CD4-positive, alpha-beta memory T cell (primary cell): ENCODE measurements at regions of chr10 and their contacts with region 1.

Region 1: GRCh38 chr10:5094265-5095205 is at the start of gene AKR1C3:
- DNase-seq: peak in 4 of 5 donors; percentile 13 to 41 (median 23)
- H3K4me3 ChIP-seq: peak within 1 kb of the TSS; percentile 19 to 74
- H3K4me3 Mint-ChIP-seq: peak within 1 kb of the TSS; percentile 80 to 91 (median 86)
- H3K27ac ChIP-seq: peak within 1 kb of the TSS; percentile 22
- H3K27ac Mint-ChIP-seq: peak within 1 kb of the TSS in 6 of 7 donors; percentile 19 to 74 (median 56)
- H3K4me1 ChIP-seq: peaks cover 9% of the 10 kb centered on the region
- H3K4me1 Mint-ChIP-seq: peaks cover 6 to 10% (median 7%) of the 10 kb centered on the region in 4 donors
- H3K27me3 ChIP-seq: no peaks in the 10 kb centered on the region
- H3K27me3 Mint-ChIP-seq: peaks cover 3 to 11% of the 10 kb centered on the region in 2 donors
- total RNA-seq, gene AKR1C3: 3.4 to 4.0 TPM

Region 2: DNA sequence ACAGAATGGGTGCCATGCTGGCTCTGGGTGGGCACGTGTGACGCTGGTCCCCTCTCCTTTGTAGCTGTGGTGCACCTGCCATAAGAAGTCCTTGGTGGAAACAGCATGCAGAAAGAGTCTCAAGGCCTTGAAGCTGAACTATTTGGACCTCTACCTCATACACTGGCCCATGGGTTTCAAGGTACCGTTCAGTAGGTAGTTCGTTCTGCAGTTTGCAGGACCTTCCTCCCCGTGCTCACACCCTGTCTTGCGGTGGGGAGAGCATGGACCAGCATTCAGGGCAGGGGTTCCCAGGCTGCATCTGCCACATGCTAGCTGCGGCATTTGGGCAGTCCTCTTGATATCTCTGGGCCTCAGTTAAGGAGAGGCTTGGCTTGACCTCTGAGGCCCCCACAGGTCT is 261.2 kb before region 1 on chr10:
- CTCF ChIA-PET with region 1: no interaction called
- POLR2A ChIA-PET with region 1: no interaction called
- intact Hi-C with region 1: no loop called
- DNase-seq: no peak
- H3K4me3 ChIP-seq: no peak overlapping the region
- H3K4me3 Mint-ChIP-seq: no peak overlapping the region
- H3K27ac ChIP-seq: no peak overlapping the region
- H3K27ac Mint-ChIP-seq: peak overlapping the region in 1 of 7 donors; percentile 51
- H3K4me1 ChIP-seq: peaks cover 35% of the 10 kb centered on the region
- H3K4me1 Mint-ChIP-seq: peaks cover 23 to 37% (median 32%) of the 10 kb centered on the region in 4 donors
- H3K27me3 ChIP-seq: no peaks in the 10 kb centered on the region
- H3K27me3 Mint-ChIP-seq: peaks cover 1 to 6% of the 10 kb centered on the region in 2 donors

Region 3: GRCh38 chr10:5012595-5012994 is 81.9 kb before region 1 on chr10:
- CTCF ChIA-PET with region 1: no interaction called
- POLR2A ChIA-PET with region 1: no interaction called
- intact Hi-C with region 1: no loop called
- DNase-seq: no peak
- H3K4me3 ChIP-seq: no peak overlapping the region
- H3K4me3 Mint-ChIP-seq: no peak overlapping the region
- H3K27ac ChIP-seq: no peak overlapping the region
- H3K27ac Mint-ChIP-seq: no peak overlapping the region
- H3K4me1 ChIP-seq: no peaks in the 10 kb centered on the region
- H3K4me1 Mint-ChIP-seq: no peaks in the 10 kb centered on the region
- H3K27me3 ChIP-seq: no peaks in the 10 kb centered on the region
- H3K27me3 Mint-ChIP-seq: peaks cover 0 to 4% of the 10 kb centered on the region in 2 donors

Region 4: DNA sequence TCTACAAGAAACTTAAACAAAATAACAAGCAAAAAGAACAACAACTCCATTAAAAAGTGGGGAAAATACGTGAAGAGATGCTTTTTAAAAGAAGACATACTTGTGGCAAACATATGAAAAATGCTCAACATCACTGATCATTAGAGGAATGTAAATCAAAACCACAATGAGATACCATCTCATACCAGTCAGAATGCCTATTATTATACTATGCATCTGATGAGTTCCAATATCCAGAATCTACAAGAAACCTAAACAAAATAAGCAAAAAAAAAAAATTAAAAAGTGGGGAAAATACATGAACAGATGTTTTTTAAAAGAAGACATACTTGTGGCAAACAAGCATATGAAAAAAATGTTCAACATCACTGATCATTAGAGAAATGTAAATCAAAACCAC is 29.9 kb before region 1 on chr10:
- CTCF ChIA-PET with region 1: no interaction called
- POLR2A ChIA-PET with region 1: no interaction called
- intact Hi-C with region 1: no loop called
- DNase-seq: no peak
- H3K4me3 ChIP-seq: no peak overlapping the region
- H3K4me3 Mint-ChIP-seq: no peak overlapping the region
- H3K27ac ChIP-seq: no peak overlapping the region
- H3K27ac Mint-ChIP-seq: no peak overlapping the region
- H3K4me1 ChIP-seq: no peaks in the 10 kb centered on the region
- H3K4me1 Mint-ChIP-seq: no peaks in the 10 kb centered on the region
- H3K27me3 ChIP-seq: no peaks in the 10 kb centered on the region
- H3K27me3 Mint-ChIP-seq: peaks cover 0 to 3% of the 10 kb centered on the region in 2 donors

Region 5: DNA sequence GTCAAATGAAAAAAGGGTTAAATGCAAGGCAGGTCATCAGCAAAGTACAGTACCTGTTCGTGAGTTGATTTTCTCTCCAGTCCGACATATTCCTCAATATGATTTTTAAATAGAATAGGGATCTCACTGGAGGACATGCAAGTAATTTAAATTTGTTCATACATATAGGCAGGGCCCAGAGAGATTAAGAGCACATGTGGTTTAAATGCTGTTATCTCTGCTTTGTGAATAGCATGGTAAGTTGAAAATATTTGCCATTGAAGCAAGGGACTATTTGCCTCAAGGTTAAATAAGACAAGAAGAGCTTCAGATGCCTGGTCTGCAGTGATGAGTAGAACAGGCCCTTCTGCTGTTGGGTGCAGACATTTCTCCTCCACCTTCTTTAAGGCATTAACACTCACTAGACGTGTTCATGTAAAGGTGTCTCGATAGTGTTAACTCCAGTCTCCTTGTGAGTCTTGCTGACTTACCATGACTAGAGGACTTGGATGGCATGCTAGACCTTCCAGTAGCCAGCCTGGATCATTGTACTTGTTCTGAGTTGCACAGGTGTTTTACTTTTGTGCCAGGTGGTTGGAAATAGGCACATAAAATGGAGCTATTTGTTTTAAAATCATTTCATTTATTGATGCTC is 15.9 kb before region 1 on chr10:
- CTCF ChIA-PET with region 1: no interaction called
- POLR2A ChIA-PET with region 1: no interaction called
- intact Hi-C with region 1: no loop called
- DNase-seq: no peak
- H3K4me3 ChIP-seq: no peak overlapping the region
- H3K4me3 Mint-ChIP-seq: no peak overlapping the region
- H3K27ac ChIP-seq: no peak overlapping the region
- H3K27ac Mint-ChIP-seq: no peak overlapping the region
- H3K4me1 ChIP-seq: no peaks in the 10 kb centered on the region
- H3K4me1 Mint-ChIP-seq: no peaks in the 10 kb centered on the region
- H3K27me3 ChIP-seq: no peaks in the 10 kb centered on the region
- H3K27me3 Mint-ChIP-seq: peaks cover 1 to 4% of the 10 kb centered on the region in 2 donors

Region 6: GRCh38 chr10:5343562-5343961 is 249.0 kb after region 1 on chr10:
- CTCF ChIA-PET with region 1: interaction called, 3 read pairs
- POLR2A ChIA-PET with region 1: no interaction called
- intact Hi-C with region 1: loop called (anchors 5 kb)
- DNase-seq: peak in 3 of 5 donors; percentile 3 to 19 (median 14)
- H3K4me3 ChIP-seq: no peak overlapping the region
- H3K4me3 Mint-ChIP-seq: no peak overlapping the region
- H3K27ac ChIP-seq: no peak overlapping the region
- H3K27ac Mint-ChIP-seq: no peak overlapping the region
- H3K4me1 ChIP-seq: no peaks in the 10 kb centered on the region
- H3K4me1 Mint-ChIP-seq: peaks cover 1 to 9% (median 5%) of the 10 kb centered on the region in 4 donors
- H3K27me3 ChIP-seq: no peaks in the 10 kb centered on the region
- H3K27me3 Mint-ChIP-seq: peaks cover 0 to 2% of the 10 kb centered on the region in 2 donors

Region 7: GRCh38 chr10:5385224-5385623 is 290.7 kb after region 1 on chr10:
- CTCF ChIA-PET with region 1: interaction called, 3 read pairs
- POLR2A ChIA-PET with region 1: no interaction called
- intact Hi-C with region 1: loop called (anchors 5 kb)
- DNase-seq: no peak
- H3K4me3 ChIP-seq: no peak overlapping the region
- H3K4me3 Mint-ChIP-seq: no peak overlapping the region
- H3K27ac ChIP-seq: no peak overlapping the region
- H3K27ac Mint-ChIP-seq: no peak overlapping the region
- H3K4me1 ChIP-seq: no peaks in the 10 kb centered on the region
- H3K4me1 Mint-ChIP-seq: peaks cover 0 to 2% (median 0%) of the 10 kb centered on the region in 4 donors
- H3K27me3 ChIP-seq: no peaks in the 10 kb centered on the region
- H3K27me3 Mint-ChIP-seq: peaks cover 2 to 9% of the 10 kb centered on the region in 2 donors